HEK293T (cell line): ENCODE measurements at regions of chr1 and their contacts with region 1.

Region 1: GRCh38 chr1:156500797-156501499 is 373 bp upstream of the MEF2D start:
- DNase-seq: peak; percentile 99

Region 2: DNA sequence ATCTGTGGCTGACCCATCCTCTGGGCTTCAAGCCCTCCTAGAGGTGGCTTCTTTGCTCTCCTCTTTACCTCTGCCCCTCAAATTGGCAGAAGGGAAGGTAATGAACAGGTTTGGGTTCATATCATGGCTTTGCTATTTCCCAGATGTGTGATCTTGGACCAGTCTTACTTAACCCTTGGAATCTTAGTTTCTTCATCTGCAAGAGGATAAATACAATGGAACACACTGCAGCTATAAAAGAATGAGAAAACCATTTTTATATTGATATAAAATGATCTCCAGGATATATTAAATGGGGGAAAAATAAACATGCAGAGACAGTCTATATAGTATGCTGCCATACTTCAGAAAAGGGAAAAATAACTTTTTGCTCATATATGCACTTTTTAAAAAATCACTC is 211.1 kb before region 1 on chr1:
- CTCF ChIA-PET with region 1: no interaction called
- POLR2A ChIA-PET with region 1: no interaction called
- DNase-seq: no peak

Region 3: DNA sequence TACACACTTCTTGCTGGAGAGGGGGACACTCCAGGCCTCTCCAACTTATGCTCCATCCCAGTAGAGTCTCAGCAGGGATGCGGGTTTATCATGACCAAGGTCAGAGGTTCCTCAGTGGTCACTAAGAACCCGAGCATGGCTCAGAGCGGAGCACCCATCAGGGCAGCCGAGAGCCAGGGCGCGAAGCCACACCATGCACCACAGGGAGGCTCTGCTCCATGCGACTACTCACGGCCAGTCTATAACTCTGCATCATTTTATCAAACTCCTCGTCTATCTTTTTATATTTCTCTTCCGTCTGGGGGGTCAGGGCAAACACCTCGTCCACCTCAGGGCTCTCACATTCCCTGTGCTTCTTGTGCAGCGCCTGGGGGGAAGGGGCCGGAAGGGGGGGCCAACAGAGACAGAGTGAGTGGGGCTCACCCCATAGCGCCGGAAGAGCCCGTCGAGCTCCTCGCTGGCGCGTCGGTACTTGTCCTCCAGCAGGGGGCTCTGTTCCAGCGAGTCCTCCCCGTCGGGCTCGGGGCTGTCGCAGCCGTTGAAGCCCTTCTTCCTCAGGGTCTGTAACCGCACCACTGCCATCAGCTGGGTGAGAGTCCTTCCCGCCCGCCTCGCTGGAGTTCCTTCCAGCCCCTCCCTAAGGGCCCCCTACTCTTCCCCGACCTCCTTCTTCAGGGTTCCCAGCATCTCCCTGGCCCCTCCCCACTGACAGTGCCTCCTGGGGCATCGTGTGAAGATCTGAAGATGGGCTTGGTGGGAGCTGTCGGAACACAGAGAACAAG is 20.3 kb before region 1 on chr1:
- CTCF ChIA-PET with region 1: interaction called, 17 read pairs
- POLR2A ChIA-PET with region 1: interaction called, 25 read pairs
- DNase-seq: peak; percentile 85

Region 4: GRCh38 chr1:156489166-156489934 is 11.6 kb before region 1 on chr1:
- CTCF ChIA-PET with region 1: interaction called, 9 read pairs
- POLR2A ChIA-PET with region 1: interaction called, 64 read pairs
- DNase-seq: no peak